ENCODE measurements at regions of chr19 and their contacts with region 1.

Region 1: DNA sequence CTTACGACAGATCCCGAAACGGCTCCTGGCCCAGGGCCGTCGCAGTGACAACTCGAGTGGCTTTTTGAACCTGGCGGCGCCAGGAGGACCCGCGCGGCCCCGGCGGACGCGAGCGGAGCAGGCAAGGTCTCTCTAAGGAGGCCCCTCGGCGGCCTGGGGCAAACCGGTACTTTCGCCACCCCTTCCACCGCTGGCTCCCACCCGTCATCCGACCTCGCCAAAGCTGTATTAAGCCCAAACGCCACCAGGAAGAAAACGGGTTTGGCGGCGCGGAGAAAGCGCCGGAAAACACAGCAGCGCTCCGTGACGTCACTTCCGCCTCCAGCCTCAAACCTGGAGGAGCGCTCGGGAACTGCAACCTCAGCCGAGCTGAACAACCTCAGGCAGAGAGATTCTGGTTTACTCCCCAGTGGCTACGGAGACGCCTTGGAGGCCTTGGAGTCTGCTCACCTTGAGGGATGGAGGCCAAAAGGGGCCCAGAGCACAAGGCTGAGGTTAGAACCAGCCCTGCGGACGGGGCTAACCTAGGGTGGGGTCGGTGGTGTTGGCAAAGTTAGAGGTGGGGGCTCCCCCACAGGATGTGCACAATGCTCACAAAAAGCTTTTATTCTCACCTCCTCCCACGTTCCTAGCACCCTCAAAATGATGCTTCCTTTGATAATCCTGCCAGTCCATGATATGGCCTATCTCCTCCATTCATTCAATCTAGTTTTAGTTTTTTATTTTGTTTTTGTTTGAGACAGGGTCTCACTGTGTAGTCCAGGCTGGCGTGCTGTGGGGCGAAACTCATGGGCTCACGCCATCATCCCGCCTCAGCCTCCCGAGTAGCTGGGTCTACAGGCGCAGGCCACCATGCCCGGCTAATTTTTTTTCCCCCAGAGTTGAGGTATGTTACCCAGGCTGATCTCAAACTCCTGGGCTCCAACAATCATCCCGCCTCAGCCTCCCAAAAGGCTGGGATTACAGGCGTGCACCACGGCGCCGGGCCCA is at the start of gene ZNF266:
- DNase-seq: peak; percentile 87 to 97 (median 90)
- ATAC-seq: peak; percentile 89
- H3K4me3 ChIP-seq: peak within 1 kb of the TSS; percentile 66
- H3K4me3 Mint-ChIP-seq: peak within 1 kb of the TSS; percentile 95
- H3K27ac ChIP-seq: peak within 1 kb of the TSS; percentile 85 to 89
- H3K27ac Mint-ChIP-seq: peak within 1 kb of the TSS; percentile 97
- H3K4me1 ChIP-seq: peaks cover 19% of the 10 kb centered on the region
- H3K4me1 Mint-ChIP-seq: peaks cover 49% of the 10 kb centered on the region
- H3K27me3 ChIP-seq: no peaks in the 10 kb centered on the region
- H3K27me3 Mint-ChIP-seq: no peaks in the 10 kb centered on the region
- CTCF ChIP-seq: peak; percentile 80
- total RNA-seq, gene ZNF266: 45.5 to 46.2 TPM

Region 2: DNA sequence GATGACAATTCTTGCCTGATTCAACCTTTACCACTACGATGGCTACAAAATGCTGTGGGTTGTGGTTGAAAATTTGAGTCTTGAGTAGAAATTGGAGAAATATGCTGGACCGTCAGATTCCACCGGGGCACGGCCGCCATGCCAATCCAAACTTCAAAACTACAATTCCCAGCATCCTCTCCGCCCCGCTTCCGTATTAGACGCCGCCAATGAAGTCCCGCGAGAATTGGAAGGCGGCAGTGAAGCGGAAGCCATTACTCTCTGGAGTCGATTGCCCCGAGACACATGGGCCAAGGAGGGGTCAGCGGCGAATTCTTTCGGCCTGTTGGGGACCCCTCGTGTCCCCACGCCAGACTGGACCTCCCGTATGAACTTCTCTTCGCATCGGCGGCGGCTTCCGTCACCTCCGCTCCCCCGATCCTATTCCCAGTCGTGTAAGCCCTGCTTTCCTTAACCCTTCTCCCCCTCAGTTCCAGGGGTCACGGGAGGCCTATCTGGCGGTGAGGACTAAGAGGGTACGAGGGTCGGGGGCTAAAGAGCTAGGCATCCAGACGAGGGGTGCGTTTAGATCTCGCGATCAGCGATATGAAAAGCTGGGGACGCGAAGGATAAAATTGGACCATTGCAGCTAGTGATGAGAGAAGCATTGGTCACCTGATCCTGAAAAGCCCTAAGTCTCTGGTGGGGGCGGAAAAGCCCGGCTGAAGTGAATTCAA is 295.3 kb before region 1 on chr19 and contains the start of gene ZNF317:
- CTCF ChIA-PET with region 1: no interaction called
- POLR2A ChIA-PET with region 1: interaction called, 3 read pairs
- intact Hi-C with region 1: loop called (anchors 5 to 10 kb)
- DNase-seq: peak; percentile 81 to 96 (median 85)
- ATAC-seq: peak; percentile 90
- H3K4me3 ChIP-seq: peak within 1 kb of the TSS; percentile 94
- H3K4me3 Mint-ChIP-seq: peak within 1 kb of the TSS; percentile 96
- H3K27ac ChIP-seq: peak within 1 kb of the TSS; percentile 86 to 87
- H3K27ac Mint-ChIP-seq: peak within 1 kb of the TSS; percentile 94
- H3K4me1 ChIP-seq: peaks cover 22% of the 10 kb centered on the region
- H3K4me1 Mint-ChIP-seq: peaks cover 48% of the 10 kb centered on the region
- H3K27me3 ChIP-seq: no peaks in the 10 kb centered on the region
- H3K27me3 Mint-ChIP-seq: peaks cover 5% of the 10 kb centered on the region
- CTCF ChIP-seq: no peak
- total RNA-seq, gene ZNF317: 110 TPM

Region 3: GRCh38 chr19:9309139-9309973 is 126.2 kb before region 1 on chr19 and contains the start of gene ZNF699:
- CTCF ChIA-PET with region 1: interaction called, 4 read pairs
- POLR2A ChIA-PET with region 1: interaction called, 13 read pairs
- intact Hi-C with region 1: loop called in 1 of 2 experiments (anchors 1 kb)
- DNase-seq: peak; percentile 95 to 99 (median 98)
- ATAC-seq: peak; percentile 94
- H3K4me3 ChIP-seq: peak within 1 kb of the TSS; percentile 94
- H3K4me3 Mint-ChIP-seq: peak within 1 kb of the TSS; percentile 95
- H3K27ac ChIP-seq: peak within 1 kb of the TSS; percentile 74 to 87
- H3K27ac Mint-ChIP-seq: peak within 1 kb of the TSS; percentile 94
- H3K4me1 ChIP-seq: peaks cover 27% of the 10 kb centered on the region
- H3K4me1 Mint-ChIP-seq: peaks cover 34% of the 10 kb centered on the region
- H3K27me3 ChIP-seq: no peaks in the 10 kb centered on the region
- H3K27me3 Mint-ChIP-seq: no peaks in the 10 kb centered on the region
- CTCF ChIP-seq: no peak
- total RNA-seq, gene ZNF699: 13.4 to 14.2 TPM

Region 4: GRCh38 chr19:9329999-9330398 is 105.6 kb before region 1 on chr19:
- CTCF ChIA-PET with region 1: no interaction called
- POLR2A ChIA-PET with region 1: no interaction called
- intact Hi-C with region 1: loop called in 1 of 2 experiments (anchors 5 kb)
- DNase-seq: no peak
- ATAC-seq: no peak
- H3K4me3 ChIP-seq: no peak overlapping the region
- H3K4me3 Mint-ChIP-seq: peak overlapping the region; percentile 30
- H3K27ac ChIP-seq: no peak overlapping the region
- H3K27ac Mint-ChIP-seq: no peak overlapping the region
- H3K4me1 ChIP-seq: peaks cover 3% of the 10 kb centered on the region
- H3K4me1 Mint-ChIP-seq: peaks cover 13% of the 10 kb centered on the region
- H3K27me3 ChIP-seq: no peaks in the 10 kb centered on the region
- H3K27me3 Mint-ChIP-seq: no peaks in the 10 kb centered on the region
- CTCF ChIP-seq: no peak

Region 5: GRCh38 chr19:9348671-9349070 is 86.9 kb before region 1 on chr19:
- CTCF ChIA-PET with region 1: no interaction called
- POLR2A ChIA-PET with region 1: no interaction called
- intact Hi-C with region 1: no loop called
- DNase-seq: no peak
- ATAC-seq: no peak
- H3K4me3 ChIP-seq: no peak overlapping the region
- H3K4me3 Mint-ChIP-seq: no peak overlapping the region
- H3K27ac ChIP-seq: no peak overlapping the region
- H3K27ac Mint-ChIP-seq: no peak overlapping the region
- H3K4me1 ChIP-seq: no peaks in the 10 kb centered on the region
- H3K4me1 Mint-ChIP-seq: no peaks in the 10 kb centered on the region
- H3K27me3 ChIP-seq: no peaks in the 10 kb centered on the region
- H3K27me3 Mint-ChIP-seq: no peaks in the 10 kb centered on the region
- CTCF ChIP-seq: no peak

Region 6: DNA sequence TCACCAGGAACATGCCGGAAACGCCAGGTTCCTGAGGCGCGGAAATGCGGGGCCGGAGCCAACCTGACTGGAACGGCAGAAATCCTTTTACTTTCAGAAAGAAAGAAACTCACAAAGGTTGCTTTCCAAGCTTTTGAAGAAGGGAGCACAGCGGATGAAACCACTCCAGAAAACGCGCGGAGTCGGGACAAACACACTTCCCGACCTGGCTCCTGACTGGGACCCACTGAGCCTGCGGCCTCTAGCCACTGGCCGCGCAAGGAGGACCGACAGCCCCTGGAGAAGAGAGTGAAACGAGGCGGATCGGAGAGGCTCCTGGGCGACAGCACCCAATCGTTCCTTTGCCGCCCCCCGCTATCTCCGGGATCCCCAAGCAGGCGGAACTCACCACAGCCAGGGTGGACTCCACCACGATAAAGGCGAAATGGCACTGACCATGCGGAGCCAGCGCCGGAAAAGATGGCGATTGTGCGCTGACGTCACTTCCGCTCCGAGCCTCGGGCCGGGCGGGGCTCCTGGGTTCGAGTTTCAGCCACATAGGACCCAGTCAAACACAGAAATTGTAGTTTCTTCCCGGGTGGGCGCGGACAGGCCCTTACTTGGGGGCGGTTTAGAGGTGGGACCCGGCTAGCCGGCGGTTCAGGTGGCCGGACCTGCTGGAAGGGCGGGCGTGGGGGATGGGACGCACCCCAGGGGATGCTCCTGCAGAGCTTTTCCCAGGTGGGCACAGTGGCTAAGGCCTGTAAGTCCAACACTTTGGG is 148.7 kb after region 1 on chr19 and contains the start of gene ZNF121:
- CTCF ChIA-PET with region 1: no interaction called
- POLR2A ChIA-PET with region 1: interaction called, 13 read pairs
- intact Hi-C with region 1: loop called (anchors 2 to 10 kb)
- DNase-seq: peak; percentile 53 to 88 (median 68)
- ATAC-seq: peak; percentile 70
- H3K4me3 ChIP-seq: peak within 1 kb of the TSS; percentile 82
- H3K4me3 Mint-ChIP-seq: peak within 1 kb of the TSS; percentile 98
- H3K27ac ChIP-seq: peak within 1 kb of the TSS; percentile 92 to 93
- H3K27ac Mint-ChIP-seq: peak within 1 kb of the TSS; percentile 98
- H3K4me1 ChIP-seq: peaks cover 23% of the 10 kb centered on the region
- H3K4me1 Mint-ChIP-seq: peaks cover 36% of the 10 kb centered on the region
- H3K27me3 ChIP-seq: no peaks in the 10 kb centered on the region
- H3K27me3 Mint-ChIP-seq: peaks cover 5% of the 10 kb centered on the region
- CTCF ChIP-seq: no peak
- total RNA-seq, gene ZNF121: 42.0 to 42.1 TPM

Region 7: GRCh38 chr19:9768175-9769112 is 332.9 kb after region 1 on chr19 and contains the start of gene ZNF846:
- CTCF ChIA-PET with region 1: no interaction called
- POLR2A ChIA-PET with region 1: interaction called, 13 read pairs
- intact Hi-C with region 1: no loop called
- DNase-seq: peak; percentile 88 to 96 (median 90)
- ATAC-seq: peak; percentile 96
- H3K4me3 ChIP-seq: peak within 1 kb of the TSS; percentile 69
- H3K4me3 Mint-ChIP-seq: peak within 1 kb of the TSS; percentile 94
- H3K27ac ChIP-seq: peak within 1 kb of the TSS; percentile 93 to 94
- H3K27ac Mint-ChIP-seq: peak within 1 kb of the TSS; percentile 97
- H3K4me1 ChIP-seq: peaks cover 23% of the 10 kb centered on the region
- H3K4me1 Mint-ChIP-seq: peaks cover 12% of the 10 kb centered on the region
- H3K27me3 ChIP-seq: no peaks in the 10 kb centered on the region
- H3K27me3 Mint-ChIP-seq: no peaks in the 10 kb centered on the region
- CTCF ChIP-seq: no peak
- total RNA-seq, gene ZNF846: 7.9 to 8.5 TPM

Measured in CD4-positive, alpha-beta T cell (primary cell).